Kidney (tissue), 22 donors: ENCODE measurements at regions of chr11 and their contacts with region 1.

Region 1: GRCh38 chr11:44936525-44936924 is 14.2 kb downstream of the TP53I11 start:
- DNase-seq: peak; percentile 88 to 93 (median 91)
- H3K4me3 ChIP-seq: no peak overlapping the region
- H3K27ac ChIP-seq: no peak overlapping the region
- H3K4me1 ChIP-seq: peaks cover 0 to 8% (median 4%) of the 10 kb centered on the region in 3 donors
- H3K27me3 ChIP-seq: no peaks in the 10 kb centered on the region
- CTCF ChIP-seq: peak; percentile 99

Region 2: DNA sequence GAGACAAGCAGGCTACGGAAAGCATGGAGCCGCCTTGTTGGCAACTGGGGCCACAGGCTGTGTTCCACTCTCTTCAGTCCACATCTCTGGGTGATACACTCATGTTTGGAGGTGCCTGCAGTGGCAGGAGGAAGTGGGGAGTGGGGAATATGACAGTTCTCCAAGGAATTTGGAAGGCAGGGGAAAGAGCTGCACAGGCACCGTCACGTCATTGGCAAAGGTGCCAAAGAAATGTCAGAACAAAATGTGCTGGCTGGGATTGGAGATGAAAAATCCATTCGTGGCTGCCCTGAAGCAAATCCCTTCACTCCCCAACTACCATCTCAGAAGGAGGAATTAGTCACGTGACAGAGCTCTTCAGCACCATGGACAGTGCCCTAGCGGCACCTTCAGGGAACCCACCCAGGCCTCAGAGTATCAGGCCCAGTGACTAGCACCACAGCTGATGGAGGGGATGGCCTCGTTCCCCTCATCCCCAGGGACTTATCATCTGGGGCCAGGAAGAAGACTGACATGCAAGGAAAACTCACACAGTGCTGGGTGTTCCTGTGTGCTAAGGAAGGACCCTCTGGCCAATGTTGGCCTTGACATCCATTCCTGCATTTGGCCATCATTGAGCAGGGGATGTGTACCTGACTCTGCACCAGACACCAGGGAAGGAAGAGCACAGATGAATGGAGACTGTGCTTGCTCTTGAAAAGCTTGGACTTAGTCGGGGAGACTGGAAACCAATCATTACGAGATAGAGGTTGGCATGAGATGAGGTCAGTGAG is 161.4 kb after region 1 on chr11:
- intact Hi-C with region 1: loop called (anchors 5 kb)
- DNase-seq: peak; percentile 56 to 94 (median 90)
- H3K4me3 ChIP-seq: no peak overlapping the region
- H3K27ac ChIP-seq: no peak overlapping the region
- H3K4me1 ChIP-seq: peaks cover 0 to 2% (median 0%) of the 10 kb centered on the region in 3 donors
- H3K27me3 ChIP-seq: no peaks in the 10 kb centered on the region
- CTCF ChIP-seq: no peak

Region 3: GRCh38 chr11:45209891-45210699 is 273.6 kb after region 1 on chr11:
- intact Hi-C with region 1: no loop called
- DNase-seq: peak; percentile 91 to 96 (median 94)
- H3K4me3 ChIP-seq: no peak overlapping the region
- H3K27ac ChIP-seq: peak overlapping the region; percentile 43 to 52
- H3K4me1 ChIP-seq: peaks cover 0 to 16% (median 6%) of the 10 kb centered on the region in 3 donors
- H3K27me3 ChIP-seq: no peaks in the 10 kb centered on the region
- CTCF ChIP-seq: no peak

Region 4: GRCh38 chr11:45322891-45323600 is 386.5 kb after region 1 on chr11:
- intact Hi-C with region 1: loop called (anchors 10 kb)
- DNase-seq: no peak
- H3K4me3 ChIP-seq: no peak overlapping the region
- H3K27ac ChIP-seq: no peak overlapping the region
- H3K4me1 ChIP-seq: no peaks in the 10 kb centered on the region
- H3K27me3 ChIP-seq: no peaks in the 10 kb centered on the region
- CTCF ChIP-seq: no peak